Activated CD4-positive, alpha-beta T cell treated with anti-CD3 and anti-CD28 coated beads for 36 hours (primary cell): ENCODE measurements at regions of chr2 and their contacts with region 1.

Region 1: DNA sequence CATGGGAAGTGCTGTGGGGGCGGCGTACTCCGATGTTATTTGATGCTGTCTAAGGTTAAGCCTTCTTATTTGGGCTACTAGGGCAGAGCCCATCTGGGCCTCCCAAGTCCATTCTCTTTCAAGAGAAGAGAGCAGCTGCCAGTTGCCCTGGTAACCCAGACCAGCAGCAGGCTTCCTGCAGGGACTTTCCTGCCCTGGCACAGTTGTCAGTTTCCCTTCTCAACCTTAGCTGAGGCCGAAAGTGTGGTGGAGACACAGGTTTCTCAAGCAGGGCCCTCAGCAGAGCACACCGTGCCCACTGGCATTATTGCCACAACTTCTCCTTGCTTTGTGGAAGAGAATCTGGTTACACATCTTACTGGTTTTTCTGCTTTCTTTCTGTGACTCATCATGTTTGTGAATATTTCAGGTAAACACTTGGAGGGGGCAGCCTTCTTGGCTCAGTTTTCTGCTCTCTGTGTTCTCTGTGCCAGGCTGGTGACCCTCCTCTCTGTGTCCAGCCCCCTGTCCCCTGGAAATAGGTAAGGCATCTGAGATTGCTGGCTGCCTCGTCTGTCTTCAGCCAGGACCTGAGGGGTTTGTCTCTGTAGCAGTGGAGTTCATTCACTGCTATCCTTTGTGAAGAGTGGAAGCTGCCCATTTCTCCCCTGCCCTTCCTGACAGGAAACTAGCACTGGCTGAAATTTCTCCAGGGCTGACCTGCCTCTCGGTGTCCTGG is 111.0 kb downstream of the B3GNT2 start:
- DNase-seq: peak; percentile 69
- ATAC-seq: peak; percentile 20
- H3K4me3 Mint-ChIP-seq: no peak overlapping the region
- H3K27ac Mint-ChIP-seq: peak overlapping the region; percentile 79
- H3K4me1 Mint-ChIP-seq: peaks cover 72% of the 10 kb centered on the region
- H3K27me3 Mint-ChIP-seq: no peaks in the 10 kb centered on the region

Region 2: GRCh38 chr2:62038975-62039771 is 267.7 kb before region 1 on chr2:
- CTCF ChIA-PET with region 1: no interaction called
- POLR2A ChIA-PET with region 1: no interaction called
- intact Hi-C with region 1: loop called in 1 of 2 experiments (anchors 2 kb)
- DNase-seq: peak; percentile 53
- ATAC-seq: peak; percentile 97
- H3K4me3 Mint-ChIP-seq: no peak overlapping the region
- H3K27ac Mint-ChIP-seq: peak overlapping the region; percentile 81
- H3K4me1 Mint-ChIP-seq: peaks cover 16% of the 10 kb centered on the region
- H3K27me3 Mint-ChIP-seq: no peaks in the 10 kb centered on the region

Region 3: GRCh38 chr2:62227386-62228075 is 79.4 kb before region 1 on chr2:
- CTCF ChIA-PET with region 1: no interaction called
- POLR2A ChIA-PET with region 1: interaction called, 10 read pairs
- intact Hi-C with region 1: no loop called
- DNase-seq: no peak
- ATAC-seq: peak; percentile 51
- H3K4me3 Mint-ChIP-seq: no peak overlapping the region
- H3K27ac Mint-ChIP-seq: peak overlapping the region; percentile 4
- H3K4me1 Mint-ChIP-seq: peaks cover 19% of the 10 kb centered on the region
- H3K27me3 Mint-ChIP-seq: no peaks in the 10 kb centered on the region